Activated CD4-positive, alpha-beta memory T cell treated with anti-CD3 and anti-CD28 coated beads for 36 hours (primary cell): ENCODE measurements at regions of chr6 and their contacts with region 1.

Region 1: DNA sequence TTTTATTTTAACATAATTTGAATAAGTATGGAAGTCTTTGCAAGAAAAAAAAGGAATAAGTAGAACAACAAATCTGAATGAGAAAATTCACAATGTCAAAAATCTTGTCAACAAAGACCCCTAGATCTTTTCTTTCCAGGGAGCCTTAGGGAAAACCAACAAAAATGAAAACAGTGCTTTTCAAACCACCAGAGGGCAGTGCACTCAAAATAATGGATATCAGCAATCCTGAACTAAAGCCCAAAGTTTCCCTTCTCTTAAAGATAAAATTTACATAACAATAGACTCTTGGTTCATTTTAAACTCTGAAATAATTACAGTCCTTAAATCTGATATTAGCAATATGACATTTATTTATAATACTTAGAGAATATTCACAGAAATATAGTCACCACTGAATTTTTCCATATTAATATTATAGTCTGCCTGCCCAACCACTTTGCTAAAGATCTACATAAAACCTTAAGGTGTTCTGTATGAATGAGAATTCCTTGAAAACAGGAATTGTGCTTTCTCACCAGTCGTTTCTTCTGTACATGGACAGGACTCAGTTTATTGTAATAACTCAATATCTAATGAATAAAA is 105.3 kb upstream of the BMP5 start:
- DNase-seq: no peak
- H3K4me3 Mint-ChIP-seq: no peak overlapping the region
- H3K27ac Mint-ChIP-seq: no peak overlapping the region
- H3K4me1 Mint-ChIP-seq: no peaks in the 10 kb centered on the region
- H3K27me3 Mint-ChIP-seq: no peaks in the 10 kb centered on the region

Region 2: DNA sequence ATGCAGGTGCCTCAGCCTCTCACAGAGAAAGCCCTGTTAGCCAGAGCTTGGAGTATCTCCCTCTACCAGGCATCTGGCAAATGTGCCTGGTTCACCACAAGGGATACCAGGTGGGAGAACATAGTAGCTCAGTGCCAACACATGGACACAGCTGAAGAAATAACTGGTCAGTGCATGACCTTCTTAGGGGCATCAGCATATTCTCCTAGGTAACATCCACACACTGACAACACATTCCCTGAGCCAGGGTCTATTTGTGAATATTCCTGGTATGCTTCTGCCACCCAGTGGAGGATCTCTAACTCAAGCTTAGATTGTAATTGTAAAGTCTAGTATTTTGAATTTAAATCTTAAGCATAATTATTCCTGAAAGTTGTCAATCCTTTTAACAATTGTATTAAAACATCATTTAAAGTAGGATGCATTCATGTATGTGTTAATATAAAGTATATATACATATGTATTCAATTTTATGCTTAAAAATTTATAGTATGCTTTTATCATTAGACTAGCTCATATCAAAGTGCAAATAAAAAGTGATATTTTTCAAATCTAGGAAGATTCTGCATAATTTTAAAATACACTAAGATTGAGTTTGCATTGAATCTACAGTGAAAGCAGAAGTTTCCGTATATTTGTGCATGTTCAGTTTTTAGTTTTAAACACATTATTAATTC is 311.9 kb after region 1 on chr6:
- CTCF ChIA-PET with region 1: interaction called, 3 read pairs
- POLR2A ChIA-PET with region 1: no interaction called
- intact Hi-C with region 1: loop called (anchors 5 kb)
- DNase-seq: no peak
- H3K4me3 Mint-ChIP-seq: no peak overlapping the region
- H3K27ac Mint-ChIP-seq: no peak overlapping the region
- H3K4me1 Mint-ChIP-seq: no peaks in the 10 kb centered on the region
- H3K27me3 Mint-ChIP-seq: no peaks in the 10 kb centered on the region

Region 3: DNA sequence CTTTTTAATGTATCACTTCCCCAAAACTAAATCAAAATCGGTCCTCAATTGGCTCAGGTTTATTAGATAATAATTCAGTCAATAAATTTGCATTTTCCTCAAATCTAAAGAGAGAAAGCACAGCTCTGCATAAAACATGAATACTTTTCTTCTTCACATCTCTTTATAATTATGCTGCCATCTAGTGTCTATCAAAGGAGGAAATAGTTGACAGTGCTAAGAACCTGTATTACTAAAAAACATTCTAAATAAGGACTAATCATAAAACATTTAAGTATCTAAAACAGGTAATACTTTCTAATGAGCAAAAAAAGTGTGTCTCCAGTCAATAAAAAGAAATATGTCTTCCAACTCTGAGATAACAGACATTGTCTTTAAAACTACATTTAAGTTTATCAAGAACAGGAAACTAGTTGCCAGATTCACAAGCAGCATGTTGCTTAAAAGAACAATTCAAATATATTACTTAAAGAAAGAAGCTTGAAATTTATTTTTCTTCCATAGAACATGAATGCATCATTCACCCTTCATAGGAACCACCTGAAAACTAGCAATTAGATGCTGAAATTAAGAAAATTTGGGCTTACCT is 718.4 kb after region 1 on chr6:
- CTCF ChIA-PET with region 1: no interaction called
- POLR2A ChIA-PET with region 1: no interaction called
- intact Hi-C with region 1: loop called (anchors 5 kb)
- DNase-seq: no peak
- H3K4me3 Mint-ChIP-seq: no peak overlapping the region
- H3K27ac Mint-ChIP-seq: no peak overlapping the region
- H3K4me1 Mint-ChIP-seq: no peaks in the 10 kb centered on the region
- H3K27me3 Mint-ChIP-seq: peaks cover 1% of the 10 kb centered on the region